ENCODE measurements at regions of chr20 and their contacts with region 1.

Region 1: DNA sequence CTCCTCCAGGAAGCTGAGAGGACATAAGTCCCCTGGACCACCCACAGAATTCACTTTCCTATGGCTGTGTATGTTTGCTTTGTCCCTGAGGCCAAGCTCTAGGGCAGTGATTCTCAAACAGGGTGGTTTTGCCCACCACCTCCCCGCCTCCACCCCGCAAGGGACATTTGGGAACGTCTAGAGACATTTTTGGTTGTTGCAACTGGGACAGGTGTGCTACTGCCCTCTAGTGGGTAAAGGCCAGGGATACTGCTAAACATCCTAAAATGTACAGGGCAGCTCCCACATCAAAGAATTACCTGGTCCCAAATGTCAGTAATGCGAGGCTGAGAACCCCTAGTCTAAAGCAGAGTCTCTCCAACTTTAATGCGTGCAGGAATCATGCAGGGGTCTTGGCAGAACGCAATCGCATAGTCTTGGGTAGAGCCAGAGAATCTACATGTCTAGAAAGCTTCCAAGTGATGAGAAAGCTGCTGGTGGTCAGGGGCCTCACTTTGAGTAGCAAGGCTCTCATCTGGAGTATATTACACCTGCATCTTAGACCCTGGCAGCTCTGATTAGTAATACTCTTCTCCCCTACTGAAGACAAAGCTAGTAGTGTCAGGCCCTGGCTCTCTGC is 5.1 kb downstream of the KCNS1 start:
- DNase-seq: peak; percentile 75
- H3K4me3 Mint-ChIP-seq: no peak overlapping the region
- H3K27ac Mint-ChIP-seq: no peak overlapping the region
- H3K4me1 Mint-ChIP-seq: peaks cover 9% of the 10 kb centered on the region
- H3K27me3 Mint-ChIP-seq: no peaks in the 10 kb centered on the region
- CTCF ChIP-seq: peak; percentile 76

Region 2: DNA sequence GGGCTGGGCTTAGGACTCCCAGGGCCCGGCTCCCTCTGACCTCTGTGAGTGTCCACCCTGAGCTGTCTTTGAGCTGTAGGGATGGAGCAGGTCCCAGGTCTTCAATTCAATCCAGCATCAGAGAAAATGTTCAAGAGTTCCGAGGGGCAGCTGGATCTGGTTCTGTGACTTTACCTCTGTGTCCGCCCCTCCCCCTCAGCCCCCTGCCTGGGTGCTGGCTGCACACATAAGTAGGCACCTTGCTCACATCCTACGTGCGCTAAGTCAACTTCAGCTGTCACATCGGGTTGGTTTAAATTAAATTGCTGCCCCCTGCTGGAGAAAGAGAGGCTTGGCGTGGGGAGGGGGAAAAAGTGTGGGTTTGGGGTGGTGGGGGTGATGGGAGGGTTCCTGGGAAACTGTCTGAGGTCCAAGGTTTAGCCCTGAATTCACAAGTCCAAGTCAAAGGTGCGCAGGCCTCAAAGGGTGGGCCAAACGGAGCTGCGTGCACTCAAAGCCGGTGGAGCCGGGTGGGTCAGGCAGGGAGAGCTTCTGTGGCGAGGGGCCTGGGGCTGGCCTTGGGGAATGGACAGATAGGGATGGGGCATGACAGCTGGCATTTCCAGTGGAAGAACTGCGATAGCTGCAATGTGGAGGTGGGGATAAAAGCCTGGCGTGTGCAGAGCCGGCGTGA is 16.1 kb after region 1 on chr20:
- CTCF ChIA-PET with region 1: interaction called, 24 read pairs
- intact Hi-C with region 1: no loop called
- DNase-seq: peak; percentile 43
- H3K4me3 Mint-ChIP-seq: no peak overlapping the region
- H3K27ac Mint-ChIP-seq: no peak overlapping the region
- H3K4me1 Mint-ChIP-seq: no peaks in the 10 kb centered on the region
- H3K27me3 Mint-ChIP-seq: peaks cover 36% of the 10 kb centered on the region
- CTCF ChIP-seq: peak; percentile 86